ENCODE measurements at regions of chr2 and their contacts with region 1.

Region 1: DNA sequence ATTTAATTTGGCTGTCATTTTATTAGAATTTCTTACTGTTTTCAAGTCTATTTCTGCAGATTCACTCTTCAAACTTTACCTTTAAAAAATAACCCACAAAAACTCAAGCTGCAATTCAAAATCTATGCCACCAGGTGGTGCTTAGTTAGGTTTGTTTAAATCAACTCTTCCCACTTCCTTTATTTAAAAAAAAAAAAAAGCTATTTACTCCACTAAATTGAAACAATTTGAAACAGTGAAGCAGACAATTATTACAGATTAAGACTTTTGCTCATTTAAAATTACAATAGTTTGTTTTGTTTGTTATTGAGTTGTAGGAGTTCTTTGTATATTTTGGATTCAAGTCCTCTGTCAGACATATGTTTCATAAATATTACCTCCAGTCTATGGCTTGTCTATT is 300.0 kb downstream of the PDE11A start:
- DNase-seq: peak; percentile 26
- H3K4me3 ChIP-seq: no peak overlapping the region
- H3K27ac ChIP-seq: no peak overlapping the region
- H3K4me1 ChIP-seq: peaks cover 29% of the 10 kb centered on the region
- H3K27me3 ChIP-seq: no peaks in the 10 kb centered on the region
- CTCF ChIP-seq: peak; percentile 53 to 57

Region 2: DNA sequence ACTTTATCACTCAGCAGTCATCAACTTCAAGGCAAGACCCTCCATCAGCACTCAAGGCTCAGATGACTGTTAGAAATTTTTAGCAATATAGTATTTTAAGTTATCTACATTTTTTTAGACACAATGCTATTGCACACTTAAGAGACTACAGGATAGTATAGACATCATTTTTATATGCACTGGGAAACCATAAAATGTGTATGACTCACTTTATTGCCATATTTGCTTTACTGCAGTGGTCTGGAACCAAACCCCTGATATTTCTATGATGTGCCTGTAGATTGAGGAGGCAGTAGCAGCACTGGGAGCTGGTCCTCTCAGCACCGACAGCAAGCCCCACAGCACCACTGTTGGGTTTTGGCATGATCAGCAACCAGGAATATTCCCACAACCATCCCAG is 824.8 kb before region 1 on chr2:
- CTCF ChIA-PET with region 1: no interaction called
- dilution Hi-C with region 1: no loop called
- in situ Hi-C with region 1: no loop called
- intact Hi-C with region 1: no loop called
- DNase-seq: no peak
- H3K4me3 ChIP-seq: no peak overlapping the region
- H3K27ac ChIP-seq: no peak overlapping the region
- H3K4me1 ChIP-seq: no peaks in the 10 kb centered on the region
- H3K27me3 ChIP-seq: no peaks in the 10 kb centered on the region
- CTCF ChIP-seq: no peak

Region 3: GRCh38 chr2:177651833-177652232 is 120.7 kb before region 1 on chr2:
- CTCF ChIA-PET with region 1: interaction called, 11 read pairs
- dilution Hi-C with region 1: no loop called
- in situ Hi-C with region 1: no loop called
- intact Hi-C with region 1: no loop called
- DNase-seq: no peak
- H3K4me3 ChIP-seq: no peak overlapping the region
- H3K27ac ChIP-seq: no peak overlapping the region
- H3K4me1 ChIP-seq: no peaks in the 10 kb centered on the region
- H3K27me3 ChIP-seq: peaks cover 5% of the 10 kb centered on the region
- CTCF ChIP-seq: no peak

Region 4: GRCh38 chr2:177799531-177799930 is 27.0 kb after region 1 on chr2:
- CTCF ChIA-PET with region 1: no interaction called
- dilution Hi-C with region 1: no loop called
- in situ Hi-C with region 1: no loop called
- intact Hi-C with region 1: loop called (anchors 1 kb)
- DNase-seq: no peak
- H3K4me3 ChIP-seq: no peak overlapping the region
- H3K27ac ChIP-seq: no peak overlapping the region
- H3K4me1 ChIP-seq: no peaks in the 10 kb centered on the region
- H3K27me3 ChIP-seq: peaks cover 5% of the 10 kb centered on the region
- CTCF ChIP-seq: peak; percentile 53 to 81

Measured in mammary epithelial cell (primary cell).